Activated naive CD4-positive, alpha-beta T cell treated with anti-CD3 and anti-CD28 coated beads, Interleukin-2, amount 10 ng/mL, durations not matched to agents 7 days and 5 days (primary cell): ENCODE measurements at regions of chr12 and their contacts with region 1.

Region 1: DNA sequence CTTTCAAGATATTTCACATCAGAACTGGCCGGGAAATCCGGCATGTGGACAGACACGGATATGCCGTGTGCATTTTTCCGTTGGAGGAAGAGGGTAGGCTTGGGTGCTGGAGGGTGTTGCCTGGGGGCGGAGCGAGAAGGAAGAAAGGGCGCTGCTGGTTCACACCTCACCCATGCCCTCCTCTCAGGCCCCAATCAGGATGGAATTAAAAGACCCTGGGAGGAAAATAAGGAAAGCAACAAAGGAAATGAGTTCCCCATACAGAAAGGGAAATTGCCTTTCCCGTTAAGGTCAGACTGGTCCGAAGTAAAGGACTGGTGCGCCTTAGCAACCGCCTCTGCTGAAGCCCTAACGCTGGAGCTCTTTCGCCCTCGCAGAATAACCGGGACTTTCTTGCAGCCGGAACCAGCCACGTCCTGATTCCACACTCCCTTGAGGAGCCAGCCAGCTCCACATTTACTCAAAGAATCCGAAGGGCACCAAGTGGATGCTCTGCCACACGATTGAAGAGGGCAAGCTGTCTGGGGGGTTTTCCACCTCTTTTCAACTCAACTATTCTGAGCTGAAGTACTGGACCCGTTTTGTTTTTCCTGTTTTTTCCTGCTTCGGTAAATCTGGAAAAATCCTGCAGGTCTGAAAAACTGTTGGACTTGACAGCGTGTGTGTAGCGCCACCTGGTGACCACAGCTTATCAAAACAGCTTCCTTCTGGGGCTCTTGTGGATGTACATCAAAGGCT is 37.7 kb upstream of the BCL2L14 start:
- DNase-seq: peak; percentile 79
- H3K4me3 Mint-ChIP-seq: peak overlapping the region; percentile 29
- H3K27ac Mint-ChIP-seq: peak overlapping the region; percentile 55
- H3K4me1 Mint-ChIP-seq: peaks cover 21% of the 10 kb centered on the region
- H3K27me3 Mint-ChIP-seq: peaks cover 3% of the 10 kb centered on the region

Region 2: GRCh38 chr12:11553871-11554533 is 479.0 kb before region 1 on chr12:
- CTCF ChIA-PET with region 1: interaction called, 19 read pairs
- DNase-seq: peak; percentile 72
- H3K4me3 Mint-ChIP-seq: no peak overlapping the region
- H3K27ac Mint-ChIP-seq: no peak overlapping the region
- H3K4me1 Mint-ChIP-seq: peaks cover 26% of the 10 kb centered on the region
- H3K27me3 Mint-ChIP-seq: peaks cover 6% of the 10 kb centered on the region

Region 3: GRCh38 chr12:11621797-11622423 is 411.1 kb before region 1 on chr12:
- CTCF ChIA-PET with region 1: interaction called, 10 read pairs
- DNase-seq: peak; percentile 31
- H3K4me3 Mint-ChIP-seq: no peak overlapping the region
- H3K27ac Mint-ChIP-seq: no peak overlapping the region
- H3K4me1 Mint-ChIP-seq: peaks cover 2% of the 10 kb centered on the region
- H3K27me3 Mint-ChIP-seq: peaks cover 8% of the 10 kb centered on the region

Region 4: GRCh38 chr12:12070674-12071656 is 37.9 kb after region 1 on chr12 and contains the start of gene BCL2L14:
- CTCF ChIA-PET with region 1: interaction called, 11 read pairs
- DNase-seq: peak; percentile 58
- H3K4me3 Mint-ChIP-seq: peak within 1 kb of the TSS; percentile 83
- H3K27ac Mint-ChIP-seq: peak within 1 kb of the TSS; percentile 91
- H3K4me1 Mint-ChIP-seq: peaks cover 37% of the 10 kb centered on the region
- H3K27me3 Mint-ChIP-seq: peaks cover 6% of the 10 kb centered on the region